ENCODE measurements at regions of chr15 and their contacts with region 1.

Region 1: GRCh38 chr15:63899193-63899592 is 65.4 kb upstream of the HERC1 start:
- DNase-seq: no peak
- ATAC-seq: no peak
- H3K4me3 ChIP-seq: no peak overlapping the region
- H3K4me3 Mint-ChIP-seq: peak overlapping the region in 1 of 3 donors; percentile 47
- H3K27ac ChIP-seq: no peak overlapping the region
- H3K27ac Mint-ChIP-seq: peak overlapping the region; percentile 48 to 66
- H3K4me1 ChIP-seq: peaks cover 8 to 61% of the 10 kb centered on the region in 2 experiments
- H3K4me1 Mint-ChIP-seq: peaks cover 55 to 62% (median 58%) of the 10 kb centered on the region in 3 donors
- H3K27me3 ChIP-seq: no peaks in the 10 kb centered on the region
- H3K27me3 Mint-ChIP-seq: no peaks in the 10 kb centered on the region

Region 2: GRCh38 chr15:63256433-63257274 is 642.5 kb before region 1 on chr15:
- CTCF ChIA-PET with region 1: no interaction called
- POLR2A ChIA-PET with region 1: no interaction called
- DNase-seq: no peak
- ATAC-seq: no peak
- H3K4me3 ChIP-seq: no peak overlapping the region
- H3K4me3 Mint-ChIP-seq: no peak overlapping the region
- H3K27ac ChIP-seq: no peak overlapping the region
- H3K27ac Mint-ChIP-seq: peak overlapping the region; percentile 2 to 34
- H3K4me1 ChIP-seq: no peaks in the 10 kb centered on the region
- H3K4me1 Mint-ChIP-seq: peaks cover 9 to 20% (median 13%) of the 10 kb centered on the region in 3 donors
- H3K27me3 ChIP-seq: no peaks in the 10 kb centered on the region
- H3K27me3 Mint-ChIP-seq: no peaks in the 10 kb centered on the region

Region 3: GRCh38 chr15:63718590-63719035 is 180.6 kb before region 1 on chr15:
- CTCF ChIA-PET with region 1: interaction called in 1 of 2 experiments, 13 read pairs
- POLR2A ChIA-PET with region 1: no interaction called
- DNase-seq: no peak
- ATAC-seq: no peak
- H3K4me3 ChIP-seq: no peak overlapping the region
- H3K4me3 Mint-ChIP-seq: no peak overlapping the region
- H3K27ac ChIP-seq: no peak overlapping the region
- H3K27ac Mint-ChIP-seq: peak overlapping the region; percentile 50 to 53
- H3K4me1 ChIP-seq: no peaks in the 10 kb centered on the region
- H3K4me1 Mint-ChIP-seq: peaks cover 1 to 12% (median 2%) of the 10 kb centered on the region in 3 donors
- H3K27me3 ChIP-seq: no peaks in the 10 kb centered on the region
- H3K27me3 Mint-ChIP-seq: no peaks in the 10 kb centered on the region

Region 4: GRCh38 chr15:63791228-63791627 is 108.0 kb before region 1 on chr15:
- CTCF ChIA-PET with region 1: no interaction called
- POLR2A ChIA-PET with region 1: no interaction called
- DNase-seq: no peak
- ATAC-seq: no peak
- H3K4me3 ChIP-seq: no peak overlapping the region
- H3K4me3 Mint-ChIP-seq: no peak overlapping the region
- H3K27ac ChIP-seq: no peak overlapping the region
- H3K27ac Mint-ChIP-seq: peak overlapping the region in 1 of 2 donors; percentile 4
- H3K4me1 ChIP-seq: peaks cover 2 to 5% of the 10 kb centered on the region in 2 experiments
- H3K4me1 Mint-ChIP-seq: peaks cover 40 to 49% (median 45%) of the 10 kb centered on the region in 3 donors
- H3K27me3 ChIP-seq: no peaks in the 10 kb centered on the region
- H3K27me3 Mint-ChIP-seq: no peaks in the 10 kb centered on the region

Region 5: DNA sequence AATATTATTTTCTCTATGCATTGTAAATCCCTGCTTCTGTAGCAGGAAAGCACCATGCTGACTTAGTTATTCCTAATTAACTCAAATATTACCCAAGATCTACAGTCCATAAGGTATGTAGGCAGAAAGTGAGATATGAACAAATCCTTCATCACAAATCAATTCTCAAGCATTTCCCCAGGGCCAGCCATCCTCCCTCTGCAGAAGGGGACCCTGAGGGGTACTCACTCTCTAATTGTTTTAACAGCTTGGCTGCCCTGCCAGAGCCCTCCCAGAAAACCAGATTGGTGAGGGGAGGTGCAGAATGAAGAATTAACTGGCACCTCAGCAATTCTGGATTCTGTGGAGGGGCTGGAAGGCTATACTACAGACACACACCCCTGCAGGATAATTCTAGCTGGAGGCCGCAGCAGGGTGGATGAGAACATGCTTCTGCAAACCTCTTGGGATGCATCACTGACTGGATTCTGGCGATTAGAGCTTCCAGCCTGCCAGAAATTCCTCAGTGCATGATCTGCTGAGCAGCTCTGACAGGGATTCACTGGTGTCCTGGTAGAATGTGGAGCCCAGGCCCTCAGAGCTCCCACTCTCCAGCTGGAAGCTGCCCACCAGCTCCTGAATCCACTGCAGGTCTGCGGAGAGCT is 23.2 kb after region 1 on chr15:
- CTCF ChIA-PET with region 1: no interaction called
- POLR2A ChIA-PET with region 1: no interaction called
- DNase-seq: no peak
- ATAC-seq: no peak
- H3K4me3 ChIP-seq: no peak overlapping the region
- H3K4me3 Mint-ChIP-seq: no peak overlapping the region
- H3K27ac ChIP-seq: no peak overlapping the region
- H3K27ac Mint-ChIP-seq: no peak overlapping the region
- H3K4me1 ChIP-seq: peaks cover 7 to 11% of the 10 kb centered on the region in 2 experiments
- H3K4me1 Mint-ChIP-seq: peaks cover 12 to 21% (median 18%) of the 10 kb centered on the region in 3 donors
- H3K27me3 ChIP-seq: no peaks in the 10 kb centered on the region
- H3K27me3 Mint-ChIP-seq: no peaks in the 10 kb centered on the region